ENCODE measurements at regions of chr2 and their contacts with region 1.

Region 1: GRCh38 chr2:43412121-43412753 is 183.6 kb downstream of the THADA start:
- DNase-seq: no peak
- ATAC-seq: peak in 4 of 8 donors; percentile 62 to 76 (median 70)
- H3K4me3 ChIP-seq: no peak overlapping the region
- H3K27ac ChIP-seq: peak overlapping the region in 5 of 10 donors; percentile 26 to 62 (median 51)
- H3K4me1 ChIP-seq: peaks cover 0 to 63% (median 54%) of the 10 kb centered on the region in 9 donors
- H3K27me3 ChIP-seq: no peaks in the 10 kb centered on the region
- CTCF ChIP-seq: no peak

Region 2: DNA sequence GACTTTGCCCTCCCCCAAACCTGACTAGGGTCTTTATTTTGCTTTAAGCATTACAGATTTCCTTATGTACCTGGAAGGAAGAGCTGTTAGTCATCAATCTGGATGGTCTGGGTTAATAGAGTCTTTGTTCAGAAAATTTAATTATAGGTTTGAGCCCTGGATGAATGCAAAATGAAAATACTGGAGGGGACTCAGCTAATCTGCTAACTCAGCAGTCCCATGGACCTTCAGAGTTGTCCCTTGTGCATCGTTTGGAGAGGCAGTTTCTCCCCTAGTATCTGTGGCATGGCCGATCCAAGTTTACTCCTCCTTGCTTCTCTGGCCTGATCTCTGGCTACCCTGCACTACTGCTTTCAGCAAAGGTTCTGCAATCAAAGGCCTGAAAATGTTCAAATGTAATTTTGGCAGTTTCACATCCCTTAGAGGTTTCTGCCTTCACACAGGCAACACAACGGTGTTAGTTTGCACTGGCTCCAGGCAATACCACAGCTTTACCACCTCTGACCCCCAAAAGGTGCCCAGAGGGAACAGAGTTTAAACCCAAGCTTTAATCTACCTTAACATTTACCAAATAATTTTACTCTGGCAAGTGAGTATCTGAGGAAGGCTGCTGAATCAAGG is 49.3 kb after region 1 on chr2:
- intact Hi-C with region 1: loop called in 1 of 10 experiments (anchors 5 kb)
- DNase-seq: no peak
- ATAC-seq: peak in 4 of 8 donors; percentile 7 to 23 (median 12)
- H3K4me3 ChIP-seq: no peak overlapping the region
- H3K27ac ChIP-seq: peak overlapping the region in 5 of 10 donors; percentile 2 to 48 (median 11)
- H3K4me1 ChIP-seq: peaks cover 3 to 78% (median 49%) of the 10 kb centered on the region in 9 donors
- H3K27me3 ChIP-seq: no peaks in the 10 kb centered on the region
- CTCF ChIP-seq: no peak

Measured in heart right ventricle (tissue), 16 donors.